HCT116 (cell line): ENCODE measurements at regions of chr1 and their contacts with region 1.

Region 1: DNA sequence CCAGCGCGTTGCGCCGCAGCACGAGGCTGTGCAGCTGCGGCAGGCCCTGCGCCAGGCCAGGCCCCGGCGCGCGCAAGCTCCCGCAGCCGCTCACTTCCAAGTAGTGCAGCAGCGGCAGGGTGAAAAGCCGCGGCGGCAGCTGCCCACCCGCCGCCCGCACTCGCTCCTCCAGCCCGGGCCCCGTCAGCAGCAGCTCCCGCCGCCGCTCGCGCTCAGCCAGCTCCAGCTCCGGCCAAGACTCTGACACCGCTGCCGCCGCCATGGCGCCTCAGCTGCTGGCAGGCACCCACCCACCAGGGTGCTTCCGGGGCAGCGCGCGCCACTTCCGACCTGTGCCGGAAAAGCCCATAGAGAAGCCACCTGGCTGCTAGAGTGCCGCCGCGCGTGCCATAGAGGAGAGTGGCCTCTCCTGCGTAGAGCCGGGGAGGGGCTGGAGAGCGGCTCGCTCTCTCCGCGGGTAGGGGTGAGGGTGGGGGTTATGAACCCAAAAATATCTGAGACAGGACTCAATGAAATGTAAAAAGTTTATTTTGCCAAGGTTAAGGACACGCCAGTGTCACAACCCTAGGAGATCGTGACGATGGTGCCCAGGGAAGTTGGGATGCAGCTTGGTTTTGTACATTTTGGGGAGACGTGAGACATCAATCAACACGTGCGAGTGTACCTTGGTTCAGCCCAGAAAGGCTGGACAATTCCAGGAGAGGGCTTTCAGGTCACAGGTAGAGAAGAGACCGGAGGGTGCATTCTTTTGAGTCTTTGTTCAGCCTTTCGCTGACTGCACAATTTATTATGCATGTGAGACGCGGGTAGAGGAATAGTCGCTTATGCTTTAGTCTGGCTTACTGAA is at the start of gene LRRC47:
- DNase-seq: peak; percentile 77
- ATAC-seq: peak; percentile 98
- H3K4me3 ChIP-seq: peak within 1 kb of the TSS; percentile 80 to 95
- H3K27ac ChIP-seq: peak within 1 kb of the TSS; percentile 61
- H3K4me1 ChIP-seq: peaks cover 14 to 30% of the 10 kb centered on the region in 2 experiments; a peak in 3 of 4 replicates
- H3K27me3 ChIP-seq: no peaks in the 10 kb centered on the region
- CTCF ChIP-seq: no peak
- POLR2A ChIP-seq: peak; percentile 61
- RAD21 ChIP-seq: no peak
- total RNA-seq, gene LRRC47: 48.0 TPM

Region 2: DNA sequence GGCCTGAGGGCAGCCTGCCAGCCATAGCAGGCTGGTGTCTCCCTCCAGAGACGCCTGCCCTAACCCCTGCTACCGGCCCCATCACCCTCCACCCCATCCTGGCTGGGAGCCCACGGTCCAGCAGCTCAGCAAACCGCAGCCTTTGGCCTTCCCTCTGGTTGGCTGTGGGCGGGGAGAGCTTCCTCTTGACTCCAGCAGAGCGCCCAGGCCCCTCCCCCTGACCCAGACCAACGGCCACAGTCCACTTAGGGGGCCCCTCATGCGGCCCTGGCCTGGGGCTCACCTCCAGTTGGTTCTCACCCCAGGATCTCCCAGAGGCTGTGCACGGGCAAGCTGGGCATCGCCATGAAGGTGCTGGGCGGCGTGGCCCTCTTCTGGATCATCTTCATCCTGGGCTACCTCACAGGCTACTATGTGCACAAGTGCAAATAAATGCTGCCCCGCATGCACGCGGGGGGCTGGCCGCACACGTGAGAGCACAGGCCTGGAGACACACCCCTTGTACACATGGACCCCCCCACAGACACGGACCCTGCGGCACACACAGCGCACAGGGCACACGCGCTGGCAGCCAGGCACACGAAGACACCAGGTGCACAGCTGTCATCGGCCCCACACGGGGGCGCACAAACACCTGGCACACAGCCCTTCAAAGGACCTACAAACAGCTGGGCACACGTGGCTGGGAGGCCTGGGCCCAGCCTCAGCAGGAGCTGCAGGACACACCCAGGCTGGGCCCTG is 20.8 kb before region 1 on chr1:
- CTCF ChIA-PET with region 1: interaction called, 10 read pairs
- POLR2A ChIA-PET with region 1: no interaction called
- RAD21 ChIA-PET with region 1: no interaction called
- intact Hi-C with region 1: loop called (anchors 1 kb)
- DNase-seq: peak; percentile 64
- ATAC-seq: peak; percentile 64
- H3K4me3 ChIP-seq: no peak overlapping the region
- H3K27ac ChIP-seq: peak overlapping the region; percentile 30; the same call in 1 of the 2 replicates
- H3K4me1 ChIP-seq: peaks cover 31 to 44% of the 10 kb centered on the region in 2 experiments
- H3K27me3 ChIP-seq: no peaks in the 10 kb centered on the region
- CTCF ChIP-seq: peak; percentile 73 to 76 (median 74)
- POLR2A ChIP-seq: no peak
- RAD21 ChIP-seq: no peak

Region 3: DNA sequence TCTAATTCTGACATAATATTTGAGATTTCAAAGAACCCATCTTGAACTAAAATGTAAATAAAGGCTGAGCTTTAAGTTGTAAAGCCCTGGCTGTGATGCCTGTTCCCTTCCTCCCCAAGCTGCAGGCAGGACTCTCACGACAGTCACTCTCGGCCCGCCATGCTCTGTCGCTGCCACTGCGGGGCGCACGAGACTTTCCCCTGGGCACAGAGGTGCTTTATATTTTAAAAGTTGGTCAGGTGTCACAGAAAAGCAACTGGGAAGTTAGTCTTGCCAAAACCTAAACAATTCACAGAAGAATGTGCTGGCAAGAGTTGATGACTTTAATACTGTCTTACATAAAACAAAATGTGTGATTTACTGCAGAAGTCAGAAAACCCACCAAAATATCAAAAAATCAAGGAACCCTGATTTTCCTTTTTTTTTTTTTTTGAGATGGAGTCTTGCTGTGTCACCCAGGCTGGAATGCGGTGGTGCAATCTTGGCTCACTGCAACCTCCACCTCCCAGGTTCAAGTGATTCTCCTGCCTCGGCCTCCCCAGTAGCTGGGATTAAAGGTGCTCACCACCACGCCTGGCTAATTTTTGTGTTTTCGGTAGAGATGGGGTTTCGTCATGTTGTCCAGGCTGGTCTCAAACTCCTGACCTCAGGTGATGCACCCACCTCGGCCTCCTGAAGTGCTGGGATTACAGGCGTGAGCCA is 10.8 kb before region 1 on chr1:
- CTCF ChIA-PET with region 1: interaction called, 3 read pairs
- POLR2A ChIA-PET with region 1: no interaction called
- RAD21 ChIA-PET with region 1: no interaction called
- intact Hi-C with region 1: loop called (anchors 2 kb)
- DNase-seq: no peak
- ATAC-seq: peak; percentile 84
- H3K4me3 ChIP-seq: no peak overlapping the region
- H3K27ac ChIP-seq: no peak overlapping the region; the same call in 1 of the 2 replicates
- H3K4me1 ChIP-seq: no peaks in the 10 kb centered on the region
- H3K27me3 ChIP-seq: no peaks in the 10 kb centered on the region
- CTCF ChIP-seq: peak; percentile 53 to 70 (median 69); a peak in 5 of 6 replicates
- POLR2A ChIP-seq: no peak
- RAD21 ChIP-seq: peak; percentile 67

Region 4: DNA sequence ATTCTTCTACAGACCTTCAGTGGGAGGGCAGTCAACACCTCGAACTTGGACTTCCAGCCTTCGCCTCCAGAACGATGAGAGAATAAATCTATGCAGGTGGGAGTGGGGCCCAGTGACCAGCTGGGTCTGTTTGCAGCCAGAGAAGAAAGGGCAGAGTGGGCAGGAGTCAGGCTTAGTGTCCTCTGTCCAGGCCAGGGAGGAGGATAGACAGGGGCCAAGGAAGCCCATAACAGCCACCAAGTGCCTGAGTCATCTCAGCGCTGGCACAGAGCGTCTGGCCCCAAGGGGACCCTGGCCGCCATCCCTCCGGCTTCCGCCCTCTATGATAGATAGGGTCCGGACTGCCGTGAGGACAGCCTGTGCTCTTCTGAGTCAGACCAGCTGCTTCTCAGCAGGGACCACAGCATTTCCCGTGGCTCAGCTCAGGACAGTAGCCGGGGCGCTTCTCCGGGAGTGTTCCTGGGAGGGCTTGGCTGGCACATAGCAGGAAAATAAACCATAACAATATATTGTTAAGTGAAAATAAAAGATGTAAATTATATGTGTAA is 236.8 kb after region 1 on chr1:
- CTCF ChIA-PET with region 1: no interaction called
- POLR2A ChIA-PET with region 1: no interaction called
- RAD21 ChIA-PET with region 1: no interaction called
- intact Hi-C with region 1: no loop called
- DNase-seq: no peak
- ATAC-seq: no peak
- H3K4me3 ChIP-seq: no peak overlapping the region
- H3K27ac ChIP-seq: no peak overlapping the region
- H3K4me1 ChIP-seq: no peaks in the 10 kb centered on the region
- H3K27me3 ChIP-seq: peaks cover 24% of the 10 kb centered on the region; the same call in 1 of the 2 replicates
- CTCF ChIP-seq: no peak
- POLR2A ChIP-seq: no peak
- RAD21 ChIP-seq: no peak